Motor neuron (in vitro differentiated cells): ENCODE measurements at regions of chr17 and their contacts with region 1.

Region 1: DNA sequence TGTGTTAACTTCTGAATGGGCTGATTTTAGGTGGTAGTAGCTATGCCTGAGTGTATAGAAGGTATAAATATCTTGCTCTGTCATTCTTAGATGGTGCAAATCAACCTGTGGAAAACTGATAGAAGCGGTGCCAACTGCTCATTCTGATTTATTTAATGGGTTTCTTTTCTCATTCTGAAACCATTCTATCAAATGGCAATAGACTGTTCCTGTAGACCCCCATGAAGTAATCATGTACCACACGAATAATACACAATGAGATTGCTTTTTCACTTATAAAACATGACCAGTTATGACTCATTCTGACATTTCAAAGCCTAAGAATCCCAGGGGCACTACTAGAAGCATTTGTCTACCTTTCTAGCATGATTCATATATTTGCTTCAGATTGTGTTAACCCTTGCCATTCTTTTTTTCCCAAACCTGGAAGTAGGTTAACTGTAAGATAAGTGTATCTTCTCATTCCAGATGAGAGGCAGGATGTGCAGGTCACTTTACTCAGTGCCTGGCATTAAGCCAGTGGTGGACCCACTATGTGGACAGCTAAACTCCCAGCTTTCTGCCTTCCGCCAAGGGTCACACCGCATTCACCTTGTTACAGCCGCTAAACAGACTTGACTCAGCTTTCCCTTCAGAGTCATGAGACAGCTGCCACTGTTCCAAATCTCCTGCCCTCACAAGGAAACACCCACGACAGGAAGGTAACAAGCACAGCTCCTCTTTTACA is 16.4 kb upstream of the SLC16A11 start:
- ATAC-seq: peak in 5 of 8 experiments; percentile 68 to 76 (median 75)
- H3K4me3 ChIP-seq: no peak overlapping the region
- H3K27ac ChIP-seq: no peak overlapping the region
- H3K4me1 ChIP-seq: peaks cover 0 to 22% of the 10 kb centered on the region in 2 donors

Region 2: DNA sequence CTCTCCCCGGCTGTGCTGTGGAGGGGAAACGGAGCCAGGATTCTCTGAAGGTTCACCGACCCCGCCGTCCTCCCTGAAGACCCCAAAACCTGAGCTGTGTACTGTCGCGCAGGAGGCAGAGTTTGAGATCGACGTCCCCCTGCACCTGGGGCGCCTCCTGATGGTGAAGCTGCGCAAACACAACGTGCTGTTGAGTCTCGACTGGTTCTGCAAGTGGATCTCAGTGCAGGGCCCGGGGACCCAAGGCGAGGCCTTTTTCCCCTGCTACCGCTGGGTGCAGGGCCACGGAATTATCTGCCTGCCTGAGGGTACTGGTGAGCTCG is 166.2 kb before region 1 on chr17:
- in situ Hi-C with region 1: no loop called
- ATAC-seq: peak in 1 of 8 experiments; percentile 34
- H3K4me3 ChIP-seq: no peak overlapping the region
- H3K27ac ChIP-seq: no peak overlapping the region
- H3K4me1 ChIP-seq: no peaks in the 10 kb centered on the region

Region 3: GRCh38 chr17:7173687-7174602 is 113.6 kb after region 1 on chr17:
- in situ Hi-C with region 1: loop called in 1 of 9 experiments (anchors 25 kb)
- ATAC-seq: peak in 3 of 8 experiments; percentile 8 to 20 (median 16)
- H3K4me3 ChIP-seq: no peak overlapping the region
- H3K27ac ChIP-seq: no peak overlapping the region
- H3K4me1 ChIP-seq: peaks cover 4 to 11% of the 10 kb centered on the region in 2 donors